Posterior vena cava (tissue), 2 donors: ENCODE measurements at regions of chr12 and their contacts with region 1.

Region 1: DNA sequence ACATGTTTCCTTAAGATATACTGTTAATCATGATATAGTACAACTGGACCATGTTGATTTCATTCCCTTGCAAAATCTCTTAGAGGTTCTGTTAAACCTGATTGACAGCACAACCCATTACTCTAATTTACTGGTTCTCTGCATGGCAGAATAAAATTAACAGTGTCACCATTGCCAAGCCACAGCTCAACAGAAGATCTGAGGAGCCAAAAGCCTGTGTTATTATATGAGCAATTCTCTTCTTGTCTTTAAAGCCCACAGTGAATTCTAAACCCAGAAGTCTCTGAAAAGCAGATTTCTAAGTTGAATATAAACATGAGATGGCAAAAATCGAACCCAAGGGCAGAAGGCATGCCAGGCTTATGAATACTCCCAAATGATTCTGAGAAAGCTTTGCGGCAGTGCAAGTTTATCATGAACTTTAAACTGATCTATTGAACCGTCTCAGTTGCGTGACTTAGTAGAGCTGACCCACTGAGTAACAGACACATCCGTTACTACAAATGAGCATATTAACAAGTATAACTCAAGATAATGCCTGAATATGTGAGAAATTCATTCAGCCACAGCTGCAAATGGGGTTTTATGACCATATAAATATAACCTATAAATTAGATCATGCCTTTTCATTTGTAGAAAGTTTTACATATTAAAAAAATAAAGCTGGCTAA is 78.2 kb downstream of the IPO8 start:
- DNase-seq: no peak

Region 2: GRCh38 chr12:30587782-30588181 is 29.7 kb before region 1 on chr12:
- intact Hi-C with region 1: loop called in 1 of 2 experiments (anchors 2 kb)
- DNase-seq: no peak

Region 3: GRCh38 chr12:30774599-30774998 is 157.1 kb after region 1 on chr12:
- intact Hi-C with region 1: no loop called
- DNase-seq: no peak